Sigmoid colon (tissue), 7 donors: ENCODE measurements at regions of chr3 and their contacts with region 1.

Region 1: GRCh38 chr3:127915115-127915936 is at the start of gene KBTBD12:
- DNase-seq: peak; percentile 77
- H3K4me3 ChIP-seq: peak within 1 kb of the TSS; percentile 43 to 61 (median 55)
- H3K27ac ChIP-seq: peak within 1 kb of the TSS; percentile 79 to 92 (median 88)
- H3K4me1 ChIP-seq: peaks cover 0 to 47% (median 31%) of the 10 kb centered on the region in 4 donors
- H3K27me3 ChIP-seq: no peaks in the 10 kb centered on the region
- CTCF ChIP-seq: no peak
- EP300 ChIP-seq: no peak
- POLR2A ChIP-seq: peak; percentile 20 to 32
- total RNA-seq, gene KBTBD12: 2.5 to 5.9 (median 3.3) TPM

Region 2: GRCh38 chr3:127690823-127691452 is 224.4 kb before region 1 on chr3:
- intact Hi-C with region 1: loop called (anchors 10 kb)
- DNase-seq: no peak
- H3K4me3 ChIP-seq: no peak overlapping the region
- H3K27ac ChIP-seq: peak overlapping the region; percentile 74 to 86 (median 82)
- H3K4me1 ChIP-seq: peaks cover 0 to 40% (median 37%) of the 10 kb centered on the region in 4 donors
- H3K27me3 ChIP-seq: no peaks in the 10 kb centered on the region
- CTCF ChIP-seq: peak; percentile 44 to 63 (median 59)
- EP300 ChIP-seq: no peak
- POLR2A ChIP-seq: no peak

Region 3: DNA sequence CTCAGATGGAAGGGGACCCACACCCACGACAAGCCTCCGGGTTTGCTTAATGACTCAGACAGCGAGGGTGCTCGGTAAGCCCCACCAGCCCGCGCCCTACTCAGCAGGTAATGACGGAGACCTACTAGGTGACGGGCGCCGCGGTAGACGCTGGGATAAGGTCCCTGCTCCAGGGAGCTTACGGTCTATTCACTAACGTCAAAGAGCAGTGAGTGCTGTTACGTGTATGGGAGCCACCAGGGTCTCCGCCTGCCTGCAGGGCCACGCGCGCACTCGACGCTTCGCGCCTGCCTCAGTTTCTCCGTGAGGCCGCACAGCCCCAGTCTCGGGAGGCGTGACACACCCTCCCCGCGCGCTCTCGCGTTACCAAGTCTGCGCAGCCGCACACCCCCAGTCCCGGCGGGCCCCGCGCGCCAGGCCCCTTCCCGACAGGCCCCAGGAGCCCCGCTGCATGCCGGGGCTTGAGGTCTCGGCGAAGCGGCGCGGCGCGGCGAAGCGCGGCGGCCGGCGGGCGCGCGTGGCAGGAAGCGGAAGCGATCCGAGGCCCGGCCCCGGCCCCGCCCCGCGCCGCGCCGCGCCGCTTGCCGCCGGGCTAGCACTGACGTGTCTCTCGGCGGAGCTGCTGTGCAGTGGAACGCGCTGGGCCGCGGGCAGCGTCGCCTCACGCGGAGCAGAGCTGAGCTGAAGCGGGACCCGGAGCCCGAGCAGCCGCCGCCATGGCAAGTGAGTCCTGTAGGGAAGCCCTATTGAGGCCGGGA is 136.7 kb after region 1 on chr3 and contains the start of gene SEC61A1:
- intact Hi-C with region 1: loop called (anchors 10 kb)
- DNase-seq: peak; percentile 96
- H3K4me3 ChIP-seq: peak within 1 kb of the TSS; percentile 82 to 99 (median 98)
- H3K27ac ChIP-seq: peak within 1 kb of the TSS; percentile 94 to 97 (median 94)
- H3K4me1 ChIP-seq: peaks cover 0 to 45% (median 33%) of the 10 kb centered on the region in 4 donors
- H3K27me3 ChIP-seq: no peaks in the 10 kb centered on the region
- CTCF ChIP-seq: no peak
- EP300 ChIP-seq: peak in 1 of 4 donors; percentile 29
- POLR2A ChIP-seq: peak; percentile 38 to 60
- total RNA-seq, gene SEC61A1: 52.3 to 82.5 (median 63.0) TPM